ENCODE measurements at regions of chr1 and their contacts with region 1.

Region 1: GRCh38 chr1:145963995-145964901 is at the starts of genes ANKRD34A and POLR3GL:
- DNase-seq: peak; percentile 95 to 97
- ATAC-seq: peak; percentile 77 to 82 (median 78)
- H3K4me3 ChIP-seq: peak within 1 kb of the TSS; percentile 85
- H3K27ac ChIP-seq: peak within 1 kb of the TSS; percentile 86
- H3K4me1 ChIP-seq: peaks cover 42% of the 10 kb centered on the region
- H3K27me3 ChIP-seq: no peaks in the 10 kb centered on the region
- CTCF ChIP-seq: no peak
- total RNA-seq, gene ANKRD34A: 0.42 to 12.3 (median 4.9) TPM
- total RNA-seq, gene POLR3GL: 30.5 to 62.5 (median 48.9) TPM

Region 2: GRCh38 chr1:145858894-145859490 is 105.3 kb before region 1 on chr1 and contains the start of gene PIAS3:
- intact Hi-C with region 1: loop called in 1 of 2 experiments (anchors 5 kb)
- DNase-seq: peak; percentile 97 to 98
- ATAC-seq: peak; percentile 92 to 95 (median 94)
- H3K4me3 ChIP-seq: peak within 1 kb of the TSS; percentile 81
- H3K27ac ChIP-seq: peak within 1 kb of the TSS; percentile 88
- H3K4me1 ChIP-seq: peaks cover 5% of the 10 kb centered on the region
- H3K27me3 ChIP-seq: no peaks in the 10 kb centered on the region
- CTCF ChIP-seq: no peak
- total RNA-seq, gene PIAS3: 9.7 to 18.2 (median 15.3) TPM

Region 3: DNA sequence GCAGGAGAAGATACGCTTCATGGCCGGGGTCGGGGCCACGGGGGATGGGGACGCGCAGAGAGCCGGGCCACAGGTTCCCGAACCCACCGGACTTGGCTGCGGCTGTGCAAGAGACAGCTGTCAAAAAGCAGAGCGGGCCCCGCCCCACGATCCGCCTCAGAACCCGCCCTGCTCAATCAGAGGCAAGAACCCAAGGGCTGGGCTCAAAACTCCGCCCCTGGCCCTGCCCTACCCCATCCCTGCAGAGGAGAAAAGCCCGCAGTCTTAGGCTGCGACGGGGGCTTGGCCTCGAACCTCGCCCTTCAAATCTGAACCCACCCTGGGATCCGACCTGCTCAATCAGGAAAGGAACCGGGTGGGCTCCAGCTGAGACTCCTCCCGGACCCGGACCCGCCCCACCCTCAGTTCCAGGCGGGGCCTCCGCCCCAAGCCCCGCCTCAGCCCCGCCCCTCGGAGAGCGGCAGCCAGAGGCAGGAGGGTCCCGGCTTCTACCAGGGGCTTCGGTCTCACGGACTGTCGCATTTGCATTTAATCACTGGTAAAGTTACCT is 78.4 kb before region 1 on chr1 and contains the start of gene ANKRD35:
- intact Hi-C with region 1: loop called in 1 of 2 experiments (anchors 5 kb)
- DNase-seq: peak; percentile 89 to 92
- ATAC-seq: peak; percentile 83 to 91 (median 86)
- H3K4me3 ChIP-seq: peak within 1 kb of the TSS; percentile 88
- H3K27ac ChIP-seq: peak within 1 kb of the TSS; percentile 3
- H3K4me1 ChIP-seq: peaks cover 16% of the 10 kb centered on the region
- H3K27me3 ChIP-seq: no peaks in the 10 kb centered on the region
- CTCF ChIP-seq: no peak
- total RNA-seq, gene ANKRD35: 2.6 to 6.0 (median 4.6) TPM

Region 4: GRCh38 chr1:145918144-145918992 is 45.9 kb before region 1 on chr1 and contains the start of gene PEX11B:
- intact Hi-C with region 1: no loop called
- DNase-seq: peak; percentile 89 to 93
- ATAC-seq: peak; percentile 88 to 94 (median 90)
- H3K4me3 ChIP-seq: peak within 1 kb of the TSS; percentile 98
- H3K27ac ChIP-seq: peak within 1 kb of the TSS; percentile 88
- H3K4me1 ChIP-seq: peaks cover 21% of the 10 kb centered on the region
- H3K27me3 ChIP-seq: no peaks in the 10 kb centered on the region
- CTCF ChIP-seq: no peak
- total RNA-seq, gene PEX11B: 19.3 to 36.3 (median 23.1) TPM

Measured in psoas muscle (tissue), 8 donors.